Activated CD8-positive, alpha-beta T cell treated with anti-CD3 and anti-CD28 coated beads, Interleukin-2, amount 10 ng/mL, durations not matched to agents 7 days and 5 days (primary cell): ENCODE measurements at regions of chr17 and their contacts with region 1.

Region 1: GRCh38 chr17:17919169-17920107 is 52.8 kb downstream of the TOM1L2 start:
- DNase-seq: peak; percentile 79
- ATAC-seq: peak; percentile 92
- H3K4me3 Mint-ChIP-seq: no peak overlapping the region
- H3K27ac Mint-ChIP-seq: no peak overlapping the region
- H3K4me1 Mint-ChIP-seq: peaks cover 26% of the 10 kb centered on the region
- H3K27me3 Mint-ChIP-seq: no peaks in the 10 kb centered on the region

Region 2: GRCh38 chr17:17681187-17681848 is 238.1 kb before region 1 on chr17 and contains the start of gene RAI1:
- CTCF ChIA-PET with region 1: interaction called, 11 read pairs
- POLR2A ChIA-PET with region 1: interaction called, 3 read pairs
- DNase-seq: peak; percentile 76
- ATAC-seq: peak; percentile 69
- H3K4me3 Mint-ChIP-seq: peak within 1 kb of the TSS; percentile 87
- H3K27ac Mint-ChIP-seq: peak within 1 kb of the TSS; percentile 92
- H3K4me1 Mint-ChIP-seq: peaks cover 48% of the 10 kb centered on the region
- H3K27me3 Mint-ChIP-seq: peaks cover 8% of the 10 kb centered on the region
- total RNA-seq, gene RAI1: 24.4 to 24.6 TPM

Region 3: DNA sequence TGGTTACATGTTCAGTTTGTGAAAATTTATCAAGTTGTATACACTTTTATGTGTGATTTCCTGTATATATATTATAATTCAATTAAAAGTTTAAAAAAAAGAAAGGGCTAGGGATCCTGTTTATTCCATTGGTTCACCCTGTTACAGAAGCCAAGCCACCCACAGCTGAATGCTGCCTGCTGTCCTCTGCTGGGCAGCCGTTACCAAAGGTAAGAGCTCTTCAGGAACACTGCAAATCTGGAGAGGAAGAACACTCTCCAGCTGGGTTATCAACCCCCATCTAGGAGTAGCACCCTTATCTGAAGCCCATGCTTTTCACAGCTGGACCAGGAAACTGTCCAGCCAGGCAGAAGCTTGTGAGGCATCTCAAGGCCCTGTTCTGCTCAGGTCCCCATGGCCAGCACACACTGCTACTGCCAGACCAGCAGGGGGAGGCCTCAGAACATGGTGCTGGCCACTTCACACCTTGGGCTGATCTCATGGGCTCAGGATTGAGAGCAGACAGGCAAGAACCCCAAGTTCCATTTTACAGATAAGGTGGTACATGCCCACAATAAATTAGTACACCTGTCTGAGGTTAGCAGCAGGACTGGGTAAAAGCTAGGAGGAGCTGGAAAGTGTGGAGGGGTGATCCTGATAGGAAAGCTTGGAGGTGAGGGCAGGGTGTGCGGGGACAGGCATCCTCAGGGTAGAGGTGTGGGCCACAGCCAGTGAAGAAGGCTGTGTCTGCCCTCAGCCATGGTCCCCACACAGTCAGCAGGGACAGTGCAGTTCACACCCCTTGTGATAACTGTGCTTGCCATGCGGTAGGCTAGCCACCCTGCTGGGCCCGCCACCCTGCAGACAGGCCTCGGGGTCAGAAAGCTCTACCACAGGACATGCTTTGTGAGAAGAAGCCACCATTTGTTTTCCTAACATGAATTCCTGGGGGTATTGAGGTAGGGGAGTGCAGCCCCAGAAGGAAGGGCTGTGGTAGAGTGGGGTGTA is 28.4 kb before region 1 on chr17:
- CTCF ChIA-PET with region 1: interaction called, 25 read pairs
- POLR2A ChIA-PET with region 1: no interaction called
- DNase-seq: peak; percentile 58
- ATAC-seq: peak; percentile 81
- H3K4me3 Mint-ChIP-seq: no peak overlapping the region
- H3K27ac Mint-ChIP-seq: no peak overlapping the region
- H3K4me1 Mint-ChIP-seq: peaks cover 7% of the 10 kb centered on the region
- H3K27me3 Mint-ChIP-seq: no peaks in the 10 kb centered on the region

Region 4: DNA sequence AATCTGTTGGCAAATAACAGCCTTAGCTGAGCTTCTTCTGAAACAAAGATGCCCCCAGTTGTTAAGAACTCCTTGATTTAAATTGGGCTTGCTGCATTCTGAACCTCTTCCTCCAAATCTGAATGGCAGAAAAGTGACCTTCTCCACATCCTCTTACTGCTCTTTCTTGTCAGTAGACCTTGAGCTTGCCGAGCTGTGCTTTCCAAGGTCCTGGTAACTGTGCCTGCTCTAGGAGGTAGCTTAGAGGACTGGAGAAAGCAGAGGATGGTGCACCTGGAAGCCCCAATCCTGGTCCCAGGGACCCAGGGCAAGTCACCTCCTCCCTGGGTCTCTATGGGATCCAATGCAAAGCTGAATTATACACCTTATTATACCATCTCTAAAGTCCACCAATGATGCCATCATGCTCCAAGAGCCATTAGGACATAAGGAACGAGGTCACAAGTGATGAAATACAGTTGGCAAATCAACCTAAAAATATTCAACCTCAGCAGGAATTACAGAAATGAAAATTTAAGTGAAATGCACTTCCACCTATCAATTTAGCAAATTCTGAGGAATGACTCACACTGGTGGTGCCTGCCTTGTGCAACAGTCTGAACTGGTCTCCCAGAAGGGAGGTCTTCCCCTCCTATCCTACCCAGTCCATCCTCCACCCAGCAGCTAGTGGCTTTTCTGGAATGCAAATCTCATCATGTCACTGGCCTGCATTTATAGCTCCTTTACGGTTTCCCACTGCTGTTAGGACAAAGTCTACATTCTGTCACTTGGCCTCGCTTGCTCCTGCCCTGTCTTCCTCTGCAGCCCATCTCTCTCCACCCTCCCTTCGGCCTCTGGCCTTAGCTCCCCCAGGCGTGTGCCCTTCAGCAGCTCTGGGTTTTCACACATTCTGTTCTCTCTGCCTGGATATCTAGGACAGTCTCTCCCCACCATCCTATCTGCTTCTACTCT is 16.2 kb after region 1 on chr17:
- CTCF ChIA-PET with region 1: interaction called, 17 read pairs
- POLR2A ChIA-PET with region 1: no interaction called
- DNase-seq: no peak
- ATAC-seq: peak; percentile 27
- H3K4me3 Mint-ChIP-seq: no peak overlapping the region
- H3K27ac Mint-ChIP-seq: peak overlapping the region; percentile 39
- H3K4me1 Mint-ChIP-seq: peaks cover 23% of the 10 kb centered on the region
- H3K27me3 Mint-ChIP-seq: no peaks in the 10 kb centered on the region

Region 5: DNA sequence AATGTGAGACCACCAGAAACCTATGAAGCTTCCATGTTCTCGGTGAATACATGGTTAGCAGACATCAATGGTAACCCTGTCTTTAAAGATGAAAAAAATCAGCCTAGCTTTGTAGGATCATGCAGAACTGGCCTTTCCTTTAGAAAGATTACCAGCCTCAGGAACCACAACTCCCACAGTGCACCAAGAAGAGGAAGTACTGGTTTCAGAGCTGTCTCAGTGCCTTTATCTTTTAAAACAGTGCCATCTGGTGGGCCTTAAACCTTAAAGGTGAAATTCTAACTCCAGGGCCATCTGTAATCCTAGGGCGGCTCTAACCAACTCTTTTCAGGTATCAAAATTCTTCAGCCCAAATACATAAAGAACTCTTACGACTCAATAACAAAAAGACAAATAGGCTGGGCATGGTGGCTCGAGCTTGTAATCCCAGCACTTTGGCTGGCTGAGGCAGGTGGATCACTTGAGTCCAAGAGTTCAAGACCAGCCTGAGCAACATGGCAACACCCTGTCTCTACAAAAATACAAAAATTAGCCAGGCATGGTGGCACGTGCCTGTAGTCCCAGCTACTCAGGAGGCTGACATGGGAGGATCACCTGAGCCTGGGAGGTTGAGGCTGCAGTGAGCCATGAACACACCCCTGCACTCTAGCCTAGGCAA is 114.1 kb after region 1 on chr17:
- CTCF ChIA-PET with region 1: interaction called, 15 read pairs
- POLR2A ChIA-PET with region 1: no interaction called
- DNase-seq: peak; percentile 81
- ATAC-seq: peak; percentile 89
- H3K4me3 Mint-ChIP-seq: no peak overlapping the region
- H3K27ac Mint-ChIP-seq: no peak overlapping the region
- H3K4me1 Mint-ChIP-seq: peaks cover 34% of the 10 kb centered on the region
- H3K27me3 Mint-ChIP-seq: no peaks in the 10 kb centered on the region

Region 6: DNA sequence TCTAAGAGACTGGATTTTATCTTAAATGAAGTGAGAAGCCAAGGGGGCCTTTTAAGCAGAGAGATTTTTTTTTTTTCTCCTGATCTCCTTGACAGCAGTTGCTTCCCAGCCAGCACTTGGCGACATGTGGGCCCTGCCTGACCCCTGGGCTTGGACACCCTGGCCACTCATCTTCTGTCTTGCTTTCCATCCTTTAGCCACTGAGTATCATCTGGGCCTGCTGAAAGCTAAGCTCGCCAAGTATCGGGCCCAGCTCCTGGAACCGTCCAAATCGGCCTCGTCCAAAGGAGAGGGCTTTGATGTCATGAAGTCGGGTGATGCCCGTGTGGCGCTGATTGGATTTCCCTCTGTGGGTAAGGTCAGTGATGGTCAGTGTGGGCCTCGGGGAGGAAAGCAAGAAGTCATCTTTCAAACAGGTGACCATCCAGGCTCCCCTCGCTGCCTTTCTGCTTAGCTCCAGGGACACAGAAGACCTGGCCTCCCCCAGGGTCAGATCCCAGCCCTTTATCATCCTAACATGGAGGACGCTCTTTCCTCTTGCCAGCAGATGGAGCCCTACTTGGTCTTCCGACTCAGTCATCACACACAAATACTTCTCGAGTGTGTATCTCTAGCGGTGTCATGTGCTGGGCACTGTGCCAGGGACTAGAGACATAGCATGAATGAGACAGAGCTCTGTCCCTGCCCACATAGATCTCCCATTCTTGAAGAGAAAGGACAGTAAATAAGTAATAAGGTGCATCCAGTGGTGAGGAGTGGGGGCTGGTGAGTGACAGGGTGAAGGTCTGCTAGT is 174.4 kb after region 1 on chr17:
- CTCF ChIA-PET with region 1: no interaction called
- POLR2A ChIA-PET with region 1: no interaction called
- DNase-seq: no peak
- ATAC-seq: peak; percentile 18
- H3K4me3 Mint-ChIP-seq: no peak overlapping the region
- H3K27ac Mint-ChIP-seq: no peak overlapping the region
- H3K4me1 Mint-ChIP-seq: peaks cover 11% of the 10 kb centered on the region
- H3K27me3 Mint-ChIP-seq: no peaks in the 10 kb centered on the region